ENCODE measurements at regions of chr9 and their contacts with region 1.

Region 1: GRCh38 chr9:32571969-32572899 is 725 bp downstream of the NDUFB6 start:
- DNase-seq: peak; percentile 87
- ATAC-seq: peak; percentile 88
- H3K4me3 Mint-ChIP-seq: peak overlapping the region; percentile 100
- H3K27ac Mint-ChIP-seq: peak overlapping the region; percentile 99
- H3K4me1 Mint-ChIP-seq: peaks cover 26% of the 10 kb centered on the region
- H3K27me3 Mint-ChIP-seq: peaks cover 2% of the 10 kb centered on the region

Region 2: GRCh38 chr9:32384364-32385151 is 187.7 kb before region 1 on chr9 and contains the start of gene ACO1:
- CTCF ChIA-PET with region 1: interaction called, 608 read pairs
- POLR2A ChIA-PET with region 1: interaction called, 4 read pairs
- DNase-seq: peak; percentile 87
- ATAC-seq: peak; percentile 98
- H3K4me3 Mint-ChIP-seq: peak within 1 kb of the TSS; percentile 78
- H3K27ac Mint-ChIP-seq: no peak within 1 kb of the TSS
- H3K4me1 Mint-ChIP-seq: peaks cover 11% of the 10 kb centered on the region
- H3K27me3 Mint-ChIP-seq: peaks cover 31% of the 10 kb centered on the region
- total RNA-seq, gene ACO1: 8.6 to 8.8 TPM

Region 3: GRCh38 chr9:32526041-32526706 is 46.1 kb before region 1 on chr9 and contains the start of gene RIGI:
- CTCF ChIA-PET with region 1: interaction called, 26 read pairs
- POLR2A ChIA-PET with region 1: interaction called, 12 read pairs
- DNase-seq: peak; percentile 86
- ATAC-seq: peak; percentile 81
- H3K4me3 Mint-ChIP-seq: peak within 1 kb of the TSS; percentile 98
- H3K27ac Mint-ChIP-seq: peak within 1 kb of the TSS; percentile 96
- H3K4me1 Mint-ChIP-seq: peaks cover 57% of the 10 kb centered on the region
- H3K27me3 Mint-ChIP-seq: no peaks in the 10 kb centered on the region
- total RNA-seq, gene RIGI: 19.2 to 19.6 TPM

Region 4: DNA sequence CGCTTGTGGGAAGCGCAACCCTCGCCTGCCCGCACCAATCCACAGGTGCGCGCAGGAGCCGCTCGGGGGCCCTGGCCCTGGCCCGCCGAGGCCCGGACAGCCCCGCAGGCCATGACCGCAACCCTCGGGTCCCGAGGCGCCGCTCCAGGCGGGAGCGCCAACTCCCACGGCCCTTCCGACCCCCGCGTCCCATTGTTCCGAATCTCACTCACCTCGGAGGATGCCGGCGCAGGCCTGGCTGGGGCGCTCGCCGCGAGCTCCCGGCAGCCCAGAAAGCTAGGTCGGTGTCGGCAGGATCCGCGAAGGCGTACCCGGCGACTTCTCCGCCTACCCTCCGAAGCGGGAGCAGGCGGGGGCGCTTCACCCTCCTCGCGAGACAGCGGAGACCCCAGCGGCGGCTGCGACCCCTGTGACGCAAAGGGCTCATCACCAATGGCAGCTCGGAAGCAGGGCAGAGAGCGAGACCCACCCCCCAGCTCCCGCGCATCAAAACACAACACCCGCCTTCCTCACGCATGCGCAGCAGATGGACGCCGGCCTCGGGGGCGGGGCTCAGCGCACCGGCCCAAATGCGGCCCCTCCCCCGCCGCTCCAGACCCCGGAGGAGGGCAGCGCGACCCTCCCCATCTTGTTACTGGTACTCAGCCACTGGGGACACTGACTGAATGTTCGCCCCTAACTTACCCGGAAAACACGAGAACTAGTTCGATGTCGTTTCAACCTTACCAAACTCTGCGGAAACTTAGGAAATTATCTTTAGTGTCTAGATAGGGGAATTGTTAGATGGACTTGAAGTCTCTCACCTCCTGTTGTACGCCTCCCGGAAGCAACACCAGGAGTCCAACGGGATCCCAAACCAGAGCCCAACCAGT is 21.4 kb before region 1 on chr9:
- CTCF ChIA-PET with region 1: interaction called, 69 read pairs
- POLR2A ChIA-PET with region 1: interaction called, 13 read pairs
- DNase-seq: peak; percentile 95
- ATAC-seq: peak; percentile 81
- H3K4me3 Mint-ChIP-seq: peak overlapping the region; percentile 89
- H3K27ac Mint-ChIP-seq: peak overlapping the region; percentile 99
- H3K4me1 Mint-ChIP-seq: peaks cover 30% of the 10 kb centered on the region
- H3K27me3 Mint-ChIP-seq: no peaks in the 10 kb centered on the region

Region 5: DNA sequence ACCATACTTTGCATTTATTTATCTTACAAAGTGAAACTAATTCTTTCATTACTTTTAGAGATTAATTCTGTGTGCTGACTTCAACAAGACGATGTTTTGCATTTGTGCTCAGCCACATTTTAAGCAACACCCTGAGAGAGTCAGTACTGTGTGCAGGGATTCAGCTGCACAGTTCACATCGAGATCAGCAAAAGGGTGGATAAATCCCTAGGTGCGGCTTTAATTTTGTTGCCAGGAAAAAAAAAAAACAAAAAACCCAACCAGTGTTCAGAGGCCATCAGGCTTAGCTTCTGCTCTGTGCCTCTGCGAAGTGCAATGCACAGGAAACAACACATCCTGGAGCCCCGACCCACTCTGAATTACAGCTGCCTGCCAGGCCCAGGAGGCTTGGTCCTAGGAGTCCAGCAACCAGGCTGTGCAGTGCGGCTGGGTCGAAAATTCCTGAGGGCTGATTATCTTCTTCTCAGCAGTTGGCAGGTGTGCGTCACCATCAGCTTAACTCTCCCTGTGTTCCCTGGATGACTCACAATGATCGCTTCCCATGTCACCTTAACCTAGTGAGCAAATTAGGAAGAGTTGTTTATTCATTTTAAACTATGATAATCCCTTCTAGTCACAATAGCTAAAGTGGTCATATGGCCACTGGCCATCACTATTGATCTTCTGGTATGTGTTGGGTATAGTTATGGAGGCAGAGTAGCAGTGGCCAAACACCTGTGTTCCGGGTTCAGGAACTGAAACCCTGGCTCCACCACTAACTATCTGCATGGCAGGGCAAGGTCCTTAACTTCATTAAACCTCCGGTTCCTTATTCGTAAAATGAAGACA is 31.9 kb after region 1 on chr9:
- CTCF ChIA-PET with region 1: no interaction called
- POLR2A ChIA-PET with region 1: no interaction called
- DNase-seq: no peak
- ATAC-seq: no peak
- H3K4me3 Mint-ChIP-seq: no peak overlapping the region
- H3K27ac Mint-ChIP-seq: no peak overlapping the region
- H3K4me1 Mint-ChIP-seq: peaks cover 2% of the 10 kb centered on the region
- H3K27me3 Mint-ChIP-seq: peaks cover 17% of the 10 kb centered on the region

Region 6: DNA sequence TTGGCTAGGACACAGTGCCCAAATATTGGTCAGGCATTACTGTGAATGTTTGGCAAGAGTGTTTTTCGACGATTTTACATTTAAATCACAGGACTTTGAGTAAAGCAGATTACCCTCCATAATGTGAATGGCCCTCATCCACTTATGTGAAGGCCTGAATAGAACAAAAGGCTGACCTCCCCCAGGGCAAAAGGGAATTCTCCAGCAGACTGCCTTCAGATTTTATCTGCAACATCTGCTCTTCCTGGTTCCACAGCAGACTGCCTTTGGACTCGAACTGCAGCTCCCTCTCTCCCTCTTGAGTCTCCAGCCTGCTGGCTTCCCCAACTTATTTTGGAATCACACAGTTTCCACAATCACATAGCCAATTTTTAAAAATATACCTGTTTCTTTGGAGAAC is 204.0 kb after region 1 on chr9:
- CTCF ChIA-PET with region 1: no interaction called
- POLR2A ChIA-PET with region 1: no interaction called
- DNase-seq: no peak
- ATAC-seq: no peak
- H3K4me3 Mint-ChIP-seq: no peak overlapping the region
- H3K27ac Mint-ChIP-seq: no peak overlapping the region
- H3K4me1 Mint-ChIP-seq: no peaks in the 10 kb centered on the region
- H3K27me3 Mint-ChIP-seq: peaks cover 12% of the 10 kb centered on the region

Measured in activated CD8-positive, alpha-beta T cell treated with anti-CD3 and anti-CD28 coated beads, Interleukin-2, amount 10 ng/mL, durations not matched to agents 7 days and 5 days (primary cell).